MCF 10A (cell line): ENCODE measurements at regions of chr6 and their contacts with region 1.

Region 1: DNA sequence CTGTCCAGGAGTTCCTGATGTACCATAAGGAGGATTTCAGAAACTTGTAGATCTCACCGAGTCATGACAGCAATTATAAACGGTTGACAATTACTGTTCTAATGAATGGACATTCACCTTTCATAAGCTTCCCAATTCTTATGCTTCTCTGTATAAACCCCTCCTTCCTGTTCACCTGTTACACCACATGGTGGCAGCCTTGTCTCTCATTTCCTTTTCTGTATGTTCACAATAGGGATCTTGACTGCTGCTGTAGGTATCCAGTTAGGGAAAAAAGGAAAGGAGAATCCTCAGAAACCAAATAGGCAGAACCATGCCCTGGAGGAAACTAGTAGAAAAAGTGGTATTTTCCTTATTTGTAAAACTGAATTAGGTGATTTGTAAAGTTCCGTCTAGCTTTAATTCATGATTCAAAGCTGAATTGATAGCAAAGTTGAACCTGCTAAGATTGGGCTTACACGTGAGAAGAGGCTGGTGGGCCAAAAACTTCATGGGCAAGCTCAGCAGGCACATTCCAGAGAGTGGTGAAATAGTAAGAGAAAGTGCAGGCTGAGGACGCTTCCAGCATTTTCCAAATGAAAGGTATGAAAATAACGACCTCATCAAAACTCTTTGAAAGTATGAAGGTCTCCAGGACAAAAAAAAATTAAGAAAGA is 29.0 kb upstream of the TBPL1 start:
- DNase-seq: peak; percentile 85
- H3K4me3 Mint-ChIP-seq: no peak overlapping the region
- H3K27ac Mint-ChIP-seq: no peak overlapping the region
- H3K4me1 Mint-ChIP-seq: peaks cover 4% of the 10 kb centered on the region
- H3K27me3 Mint-ChIP-seq: peaks cover 16% of the 10 kb centered on the region
- CTCF ChIP-seq: peak; percentile 77

Region 2: GRCh38 chr6:132962936-132963868 is 960.9 kb before region 1 on chr6:
- CTCF ChIA-PET with region 1: no interaction called
- POLR2A ChIA-PET with region 1: no interaction called
- intact Hi-C with region 1: loop called (anchors 5 kb)
- DNase-seq: peak; percentile 71
- H3K4me3 Mint-ChIP-seq: no peak overlapping the region
- H3K27ac Mint-ChIP-seq: no peak overlapping the region
- H3K4me1 Mint-ChIP-seq: peaks cover 10% of the 10 kb centered on the region
- H3K27me3 Mint-ChIP-seq: peaks cover 68% of the 10 kb centered on the region
- CTCF ChIP-seq: peak; percentile 81

Region 3: GRCh38 chr6:133512410-133513016 is 411.6 kb before region 1 on chr6:
- CTCF ChIA-PET with region 1: no interaction called
- POLR2A ChIA-PET with region 1: no interaction called
- intact Hi-C with region 1: loop called (anchors 1 kb)
- DNase-seq: peak; percentile 65
- H3K4me3 Mint-ChIP-seq: no peak overlapping the region
- H3K27ac Mint-ChIP-seq: no peak overlapping the region
- H3K4me1 Mint-ChIP-seq: no peaks in the 10 kb centered on the region
- H3K27me3 Mint-ChIP-seq: peaks cover 76% of the 10 kb centered on the region
- CTCF ChIP-seq: peak; percentile 67

Region 4: GRCh38 chr6:133939778-133940667 is 16.0 kb after region 1 on chr6:
- CTCF ChIA-PET with region 1: interaction called, 23 read pairs
- POLR2A ChIA-PET with region 1: no interaction called
- intact Hi-C with region 1: no loop called
- DNase-seq: no peak
- H3K4me3 Mint-ChIP-seq: no peak overlapping the region
- H3K27ac Mint-ChIP-seq: no peak overlapping the region
- H3K4me1 Mint-ChIP-seq: no peaks in the 10 kb centered on the region
- H3K27me3 Mint-ChIP-seq: no peaks in the 10 kb centered on the region
- CTCF ChIP-seq: no peak

Region 5: DNA sequence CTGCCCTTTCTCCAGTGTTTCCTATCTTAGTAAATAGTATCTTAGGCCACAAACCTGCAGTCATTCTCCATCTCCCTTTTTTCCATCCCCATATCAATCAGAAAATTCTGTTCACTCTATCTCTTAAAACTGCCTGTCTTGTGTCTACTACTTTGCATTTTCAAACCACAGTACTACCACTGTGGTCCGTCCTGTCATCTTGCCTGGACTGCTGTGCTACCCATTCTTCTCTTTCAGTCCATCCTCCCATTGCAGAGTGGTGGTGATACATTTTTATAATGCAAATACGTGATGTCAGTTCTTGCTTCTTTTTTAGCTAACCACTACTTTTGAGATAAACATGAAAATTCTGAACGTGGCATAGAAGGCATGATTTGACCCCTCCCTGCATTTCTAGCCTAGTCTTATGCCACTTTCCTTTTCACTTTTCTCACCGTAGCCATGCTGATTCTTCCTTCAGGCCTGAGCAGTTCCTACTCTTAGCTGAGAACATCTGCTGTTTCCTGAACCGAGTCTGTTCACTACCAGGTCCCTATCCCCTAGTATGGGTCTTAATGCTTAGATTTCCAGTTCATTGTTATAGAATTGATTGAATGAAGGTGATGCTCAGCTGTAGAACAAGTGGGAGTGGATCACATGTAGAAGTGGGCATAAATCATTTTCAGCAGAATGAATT is 42.7 kb after region 1 on chr6:
- CTCF ChIA-PET with region 1: interaction called, 11 read pairs
- POLR2A ChIA-PET with region 1: no interaction called
- intact Hi-C with region 1: no loop called
- DNase-seq: no peak
- H3K4me3 Mint-ChIP-seq: no peak overlapping the region
- H3K27ac Mint-ChIP-seq: no peak overlapping the region
- H3K4me1 Mint-ChIP-seq: peaks cover 39% of the 10 kb centered on the region
- H3K27me3 Mint-ChIP-seq: no peaks in the 10 kb centered on the region
- CTCF ChIP-seq: no peak

Region 6: GRCh38 chr6:134074151-134075055 is 150.3 kb after region 1 on chr6:
- CTCF ChIA-PET with region 1: interaction called, 51 read pairs
- POLR2A ChIA-PET with region 1: no interaction called
- intact Hi-C with region 1: no loop called
- DNase-seq: no peak
- H3K4me3 Mint-ChIP-seq: no peak overlapping the region
- H3K27ac Mint-ChIP-seq: no peak overlapping the region
- H3K4me1 Mint-ChIP-seq: no peaks in the 10 kb centered on the region
- H3K27me3 Mint-ChIP-seq: no peaks in the 10 kb centered on the region
- CTCF ChIP-seq: no peak

Region 7: DNA sequence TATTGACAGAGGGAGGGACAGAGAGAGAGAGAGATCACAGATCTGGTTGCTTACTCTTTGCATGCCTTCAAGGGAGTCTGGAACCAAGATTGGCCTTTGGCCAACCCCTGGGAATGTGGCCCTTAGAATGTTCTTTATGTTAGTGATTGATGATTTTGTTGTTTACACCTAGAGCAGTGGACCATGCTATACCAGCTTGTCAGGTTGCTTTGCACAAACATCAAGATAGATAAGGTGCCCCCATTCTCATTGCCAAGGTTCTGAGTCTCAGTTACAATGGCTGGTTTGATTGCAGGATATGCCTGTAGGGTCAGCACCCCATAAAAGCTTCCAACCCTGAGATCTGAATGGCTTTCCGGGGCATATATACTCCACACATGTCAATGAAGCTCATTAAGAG is 181.9 kb after region 1 on chr6:
- CTCF ChIA-PET with region 1: interaction called, 456 read pairs
- POLR2A ChIA-PET with region 1: interaction called, 3 read pairs
- intact Hi-C with region 1: no loop called
- DNase-seq: no peak
- H3K4me3 Mint-ChIP-seq: no peak overlapping the region
- H3K27ac Mint-ChIP-seq: no peak overlapping the region
- H3K4me1 Mint-ChIP-seq: peaks cover 21% of the 10 kb centered on the region
- H3K27me3 Mint-ChIP-seq: no peaks in the 10 kb centered on the region
- CTCF ChIP-seq: no peak